H1 (cell line): ENCODE measurements at regions of chr3 and their contacts with region 1.

Region 1: GRCh38 chr3:157606011-157606851 is 103.0 kb upstream of the VEPH1 start:
- DNase-seq: peak; percentile 67 to 94
- H3K4me3 ChIP-seq: no peak overlapping the region; a peak in 1 of 8 replicates
- H3K27ac ChIP-seq: no peak overlapping the region
- H3K4me1 ChIP-seq: no peaks in the 10 kb centered on the region
- H3K27me3 ChIP-seq: no peaks in the 10 kb centered on the region
- CTCF ChIP-seq: peak; percentile 75 to 86 (median 84)
- EP300 ChIP-seq: no peak
- POLR2A ChIP-seq: no peak
- RAD21 ChIP-seq: peak; percentile 57 to 69

Region 2: GRCh38 chr3:157594413-157594812 is 11.8 kb before region 1 on chr3:
- CTCF ChIA-PET with region 1: interaction called, 40 read pairs
- POLR2A ChIA-PET with region 1: no interaction called
- DNase-seq: no peak
- H3K4me3 ChIP-seq: no peak overlapping the region
- H3K27ac ChIP-seq: no peak overlapping the region
- H3K4me1 ChIP-seq: no peaks in the 10 kb centered on the region
- H3K27me3 ChIP-seq: no peaks in the 10 kb centered on the region
- CTCF ChIP-seq: peak; percentile 44 to 55 (median 54)
- EP300 ChIP-seq: no peak
- POLR2A ChIP-seq: no peak
- RAD21 ChIP-seq: peak in 1 of 2 experiments; percentile 34; a peak in 1 of 4 replicates

Region 3: GRCh38 chr3:157618075-157618760 is 12.0 kb after region 1 on chr3:
- CTCF ChIA-PET with region 1: interaction called, 31 read pairs
- POLR2A ChIA-PET with region 1: no interaction called
- DNase-seq: no peak
- H3K4me3 ChIP-seq: no peak overlapping the region; a peak in 1 of 8 replicates
- H3K27ac ChIP-seq: no peak overlapping the region
- H3K4me1 ChIP-seq: no peaks in the 10 kb centered on the region; a peak in 1 of 7 replicates
- H3K27me3 ChIP-seq: no peaks in the 10 kb centered on the region; a peak in 1 of 7 replicates
- CTCF ChIP-seq: peak in 2 of 3 experiments; percentile 29 to 48; a peak in 2 of 4 replicates
- EP300 ChIP-seq: no peak
- POLR2A ChIP-seq: no peak
- RAD21 ChIP-seq: peak; percentile 69 to 71

Region 4: DNA sequence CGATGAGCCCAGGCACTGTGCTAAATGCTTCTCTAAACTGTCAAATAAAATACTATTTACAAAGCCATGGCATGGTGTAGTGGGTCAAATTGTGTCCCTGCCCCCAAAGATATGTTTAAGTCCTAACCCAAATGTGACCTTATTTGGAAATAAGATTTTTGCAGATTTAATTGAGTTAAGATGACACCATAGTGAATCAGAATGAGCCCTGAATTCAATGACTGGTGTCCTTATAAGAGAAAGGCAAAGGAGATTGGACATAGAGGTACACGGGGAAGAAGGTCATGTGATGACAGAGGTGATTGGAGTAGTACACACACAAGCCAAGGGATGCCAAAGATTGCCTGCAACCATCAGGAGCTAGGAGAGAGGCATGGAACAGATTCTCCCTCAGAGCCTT is 18.6 kb after region 1 on chr3:
- CTCF ChIA-PET with region 1: interaction called, 16 read pairs
- POLR2A ChIA-PET with region 1: no interaction called
- DNase-seq: no peak
- H3K4me3 ChIP-seq: no peak overlapping the region
- H3K27ac ChIP-seq: no peak overlapping the region
- H3K4me1 ChIP-seq: no peaks in the 10 kb centered on the region
- H3K27me3 ChIP-seq: no peaks in the 10 kb centered on the region
- CTCF ChIP-seq: no peak
- EP300 ChIP-seq: no peak
- POLR2A ChIP-seq: no peak
- RAD21 ChIP-seq: no peak